Naive thymus-derived CD4-positive, alpha-beta T cell (primary cell): ENCODE measurements at regions of chr1 and their contacts with region 1.

Region 1: DNA sequence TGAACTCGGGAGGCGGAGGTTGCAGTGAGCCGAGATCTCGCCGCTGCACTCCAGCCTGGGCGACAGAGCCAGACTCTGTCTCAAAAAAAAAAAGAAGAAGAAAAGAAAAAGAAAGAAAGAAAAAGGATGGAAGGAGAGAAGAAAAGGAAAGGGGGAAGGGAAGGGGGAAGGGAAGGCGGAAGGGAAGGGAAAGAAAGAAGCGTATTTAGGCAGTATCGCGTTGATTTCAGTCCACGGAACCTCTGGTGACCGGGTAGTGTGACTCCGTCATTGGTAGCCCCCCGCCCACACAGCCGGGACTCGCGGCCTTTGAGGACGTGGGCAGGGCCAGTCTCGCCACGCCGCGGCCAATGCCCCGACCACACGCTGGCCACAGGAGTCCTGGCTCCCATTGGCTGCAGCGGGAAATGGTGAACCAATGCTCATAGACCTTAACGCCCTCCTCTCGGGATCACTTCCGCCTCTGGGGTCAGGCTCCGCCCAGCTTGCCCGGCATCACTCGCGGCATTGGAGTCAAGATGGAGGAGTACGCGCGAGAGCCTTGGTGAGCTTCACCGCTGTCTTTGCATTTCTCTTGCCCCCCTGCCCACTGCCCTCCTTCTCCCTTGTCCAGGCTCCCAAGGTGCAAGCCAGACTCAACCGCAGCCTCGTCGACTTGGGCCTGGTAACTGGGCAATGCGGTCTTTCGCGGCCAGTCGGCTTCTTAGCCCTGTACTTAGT is at the start of gene TIMM17A:
- DNase-seq: peak; percentile 84 to 94 (median 90)
- ATAC-seq: peak; percentile 99
- H3K4me3 ChIP-seq: peak within 1 kb of the TSS; percentile 97
- H3K4me3 Mint-ChIP-seq: peak within 1 kb of the TSS; percentile 90 to 100 (median 98)
- H3K27ac ChIP-seq: peak within 1 kb of the TSS; percentile 83
- H3K27ac Mint-ChIP-seq: peak within 1 kb of the TSS; percentile 89 to 99 (median 97)
- H3K4me1 ChIP-seq: peaks cover 11 to 14% of the 10 kb centered on the region in 2 donors
- H3K4me1 Mint-ChIP-seq: peaks cover 15 to 32% (median 25%) of the 10 kb centered on the region in 7 donors
- H3K27me3 ChIP-seq: no peaks in the 10 kb centered on the region
- H3K27me3 Mint-ChIP-seq: peaks cover 0 to 2% (median 0%) of the 10 kb centered on the region in 5 donors
- total RNA-seq, gene TIMM17A: 27.1 to 58.4 (median 43.1) TPM

Region 2: GRCh38 chr1:201154389-201155165 is 800.6 kb before region 1 on chr1 and contains the start of gene TMEM9:
- CTCF ChIA-PET with region 1: no interaction called
- POLR2A ChIA-PET with region 1: no interaction called
- intact Hi-C with region 1: loop called in 1 of 2 experiments (anchors 10 kb)
- DNase-seq: peak; percentile 94 to 99 (median 97)
- ATAC-seq: peak; percentile 97
- H3K4me3 ChIP-seq: peak within 1 kb of the TSS; percentile 48
- H3K4me3 Mint-ChIP-seq: peak within 1 kb of the TSS; percentile 86 to 94 (median 93)
- H3K27ac ChIP-seq: peak within 1 kb of the TSS; percentile 65
- H3K27ac Mint-ChIP-seq: peak within 1 kb of the TSS; percentile 83 to 96 (median 91)
- H3K4me1 ChIP-seq: peaks cover 7 to 14% of the 10 kb centered on the region in 2 donors
- H3K4me1 Mint-ChIP-seq: peaks cover 12 to 36% (median 20%) of the 10 kb centered on the region in 7 donors
- H3K27me3 ChIP-seq: no peaks in the 10 kb centered on the region
- H3K27me3 Mint-ChIP-seq: peaks cover 6 to 25% (median 9%) of the 10 kb centered on the region in 5 donors
- total RNA-seq, gene TMEM9: 15.3 to 24.5 (median 16.7) TPM

Region 3: DNA sequence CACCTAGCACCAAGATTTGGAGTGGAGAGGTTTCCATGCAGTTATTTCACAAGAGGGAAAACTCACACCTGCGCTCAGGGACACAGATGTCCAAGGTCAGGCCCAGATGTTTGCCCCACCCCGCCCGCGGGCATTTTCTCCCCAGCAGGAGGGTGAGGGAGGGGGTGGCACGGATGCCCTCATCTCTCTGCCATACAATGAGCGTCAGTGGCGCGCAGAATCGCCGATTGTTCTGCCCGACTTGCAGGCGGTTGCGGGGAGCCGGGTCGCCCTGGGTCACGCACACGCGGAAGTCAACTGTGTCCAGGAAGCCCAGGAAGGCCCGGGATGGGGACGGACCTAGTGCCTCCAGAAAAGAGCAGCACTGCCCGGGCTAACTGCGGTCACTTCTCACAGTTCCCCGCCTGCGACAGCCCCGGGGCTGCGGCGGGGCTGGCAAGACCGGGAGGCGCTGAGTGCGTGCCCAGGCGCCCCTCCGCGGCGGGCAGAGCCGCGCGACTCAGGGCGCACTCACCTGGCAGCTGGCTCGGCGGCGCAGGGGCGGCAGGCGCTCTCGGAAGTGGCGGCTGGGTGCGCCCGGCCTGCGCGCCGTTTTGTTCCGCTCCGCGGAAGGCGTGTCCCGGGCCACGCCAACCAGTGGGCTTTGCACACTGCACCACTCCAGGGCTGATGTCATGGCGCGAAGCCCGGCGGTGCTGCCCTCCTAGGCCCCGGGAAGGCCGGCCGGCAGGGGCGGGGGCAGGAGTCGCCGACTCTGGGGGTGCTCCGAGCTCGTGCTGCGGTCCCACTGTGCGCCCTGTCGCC is 448.4 kb before region 1 on chr1 and contains the start of gene CSRP1:
- CTCF ChIA-PET with region 1: no interaction called
- POLR2A ChIA-PET with region 1: no interaction called
- intact Hi-C with region 1: loop called in 1 of 2 experiments (anchors 5 kb)
- DNase-seq: peak; percentile 64 to 84 (median 80)
- ATAC-seq: peak; percentile 97
- H3K4me3 ChIP-seq: peak within 1 kb of the TSS; percentile 87
- H3K4me3 Mint-ChIP-seq: peak within 1 kb of the TSS; percentile 88 to 94 (median 91)
- H3K27ac ChIP-seq: peak within 1 kb of the TSS; percentile 74
- H3K27ac Mint-ChIP-seq: peak within 1 kb of the TSS; percentile 83 to 97 (median 91)
- H3K4me1 ChIP-seq: peaks cover 20 to 28% of the 10 kb centered on the region in 2 donors
- H3K4me1 Mint-ChIP-seq: peaks cover 30 to 61% (median 57%) of the 10 kb centered on the region in 7 donors
- H3K27me3 ChIP-seq: no peaks in the 10 kb centered on the region
- H3K27me3 Mint-ChIP-seq: no peaks in the 10 kb centered on the region
- total RNA-seq, gene CSRP1: 24.2 to 83.1 (median 37.7) TPM

Region 4: DNA sequence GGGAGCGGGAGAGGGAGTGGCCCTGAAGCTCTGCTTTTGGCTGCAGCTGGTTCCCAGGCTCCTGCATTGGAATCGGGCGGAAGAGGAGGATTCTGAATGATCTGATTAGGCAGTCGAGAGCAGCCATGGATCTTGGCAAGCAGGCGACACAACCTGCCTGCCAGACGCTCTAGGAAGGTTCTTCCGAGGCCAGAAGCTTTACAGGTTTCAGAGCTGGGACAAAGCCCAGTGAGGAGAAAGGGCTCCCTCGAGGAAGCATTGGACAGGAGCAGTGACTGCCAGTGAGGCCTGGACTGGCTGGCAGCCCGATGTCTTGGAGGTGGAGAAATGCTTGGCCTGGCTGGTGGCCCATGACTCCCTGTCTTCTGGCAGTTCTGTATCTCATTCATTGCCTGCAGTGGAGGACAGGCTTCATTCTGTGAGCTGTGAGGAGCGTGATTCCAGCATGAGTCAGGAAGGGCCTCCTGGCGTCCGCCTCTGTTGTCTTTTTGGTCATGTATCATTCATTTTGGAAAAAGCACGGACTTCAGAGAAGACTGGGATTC is 258.9 kb before region 1 on chr1:
- CTCF ChIA-PET with region 1: no interaction called
- POLR2A ChIA-PET with region 1: no interaction called
- intact Hi-C with region 1: no loop called
- DNase-seq: no peak
- ATAC-seq: no peak
- H3K4me3 ChIP-seq: no peak overlapping the region
- H3K4me3 Mint-ChIP-seq: no peak overlapping the region
- H3K27ac ChIP-seq: no peak overlapping the region
- H3K27ac Mint-ChIP-seq: no peak overlapping the region
- H3K4me1 ChIP-seq: no peaks in the 10 kb centered on the region
- H3K4me1 Mint-ChIP-seq: no peaks in the 10 kb centered on the region
- H3K27me3 ChIP-seq: no peaks in the 10 kb centered on the region
- H3K27me3 Mint-ChIP-seq: peaks cover 0 to 6% (median 0%) of the 10 kb centered on the region in 5 donors

Region 5: GRCh38 chr1:201895913-201896807 is 59.0 kb before region 1 on chr1:
- CTCF ChIA-PET with region 1: interaction called, 5 read pairs
- POLR2A ChIA-PET with region 1: interaction called, 3 read pairs
- intact Hi-C with region 1: loop called in 1 of 2 experiments (anchors 1 kb)
- DNase-seq: peak; percentile 54 to 86 (median 73)
- ATAC-seq: peak; percentile 93
- H3K4me3 ChIP-seq: no peak overlapping the region
- H3K4me3 Mint-ChIP-seq: peak overlapping the region in 9 of 10 donors; percentile 5 to 73 (median 60)
- H3K27ac ChIP-seq: no peak overlapping the region
- H3K27ac Mint-ChIP-seq: peak overlapping the region in 7 of 9 donors; percentile 10 to 86 (median 59)
- H3K4me1 ChIP-seq: peaks cover 0 to 8% of the 10 kb centered on the region in 2 donors
- H3K4me1 Mint-ChIP-seq: peaks cover 0 to 16% (median 6%) of the 10 kb centered on the region in 7 donors
- H3K27me3 ChIP-seq: no peaks in the 10 kb centered on the region
- H3K27me3 Mint-ChIP-seq: peaks cover 12 to 34% (median 25%) of the 10 kb centered on the region in 5 donors

Region 6: GRCh38 chr1:202018468-202019255 is 63.5 kb after region 1 on chr1:
- CTCF ChIA-PET with region 1: no interaction called
- POLR2A ChIA-PET with region 1: no interaction called
- intact Hi-C with region 1: no loop called
- DNase-seq: no peak
- ATAC-seq: peak; percentile 68
- H3K4me3 ChIP-seq: no peak overlapping the region
- H3K4me3 Mint-ChIP-seq: no peak overlapping the region
- H3K27ac ChIP-seq: no peak overlapping the region
- H3K27ac Mint-ChIP-seq: peak overlapping the region in 1 of 9 donors; percentile 36
- H3K4me1 ChIP-seq: no peaks in the 10 kb centered on the region
- H3K4me1 Mint-ChIP-seq: no peaks in the 10 kb centered on the region
- H3K27me3 ChIP-seq: no peaks in the 10 kb centered on the region
- H3K27me3 Mint-ChIP-seq: peaks cover 6 to 13% (median 11%) of the 10 kb centered on the region in 5 donors

Region 7: DNA sequence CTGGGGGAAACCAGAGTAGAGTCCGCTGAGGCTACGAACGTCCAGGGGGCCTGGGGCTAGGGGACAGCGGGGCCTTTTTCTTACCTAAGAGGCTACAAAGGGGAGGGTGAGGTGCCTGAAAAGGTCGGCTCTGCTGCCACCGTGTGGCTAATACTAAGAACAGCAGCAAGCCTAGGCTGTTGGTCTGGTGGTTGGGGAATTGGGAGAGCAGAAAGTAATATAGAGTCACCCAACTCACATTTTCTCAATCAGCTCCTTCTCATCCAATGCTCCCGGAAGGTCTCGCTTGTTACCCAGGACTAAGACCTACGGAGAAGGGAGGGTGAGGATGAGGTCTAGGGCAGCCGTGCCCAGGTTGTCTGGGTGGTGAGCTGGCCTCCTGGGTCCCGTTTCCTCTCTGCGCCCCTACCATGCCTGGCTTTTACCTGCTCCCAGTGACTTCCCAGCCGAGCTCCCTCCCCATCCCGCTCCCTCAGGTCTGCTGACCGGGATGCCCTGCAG is 180.1 kb after region 1 on chr1:
- CTCF ChIA-PET with region 1: no interaction called
- POLR2A ChIA-PET with region 1: no interaction called
- intact Hi-C with region 1: loop called in 1 of 2 experiments (anchors 5 kb)
- DNase-seq: peak in 7 of 9 donors; percentile 27 to 63 (median 53)
- ATAC-seq: peak; percentile 92
- H3K4me3 ChIP-seq: no peak overlapping the region
- H3K4me3 Mint-ChIP-seq: no peak overlapping the region
- H3K27ac ChIP-seq: no peak overlapping the region
- H3K27ac Mint-ChIP-seq: peak overlapping the region in 2 of 9 donors; percentile 24 to 43
- H3K4me1 ChIP-seq: no peaks in the 10 kb centered on the region
- H3K4me1 Mint-ChIP-seq: peaks cover 4 to 15% (median 8%) of the 10 kb centered on the region in 7 donors
- H3K27me3 ChIP-seq: no peaks in the 10 kb centered on the region
- H3K27me3 Mint-ChIP-seq: no peaks in the 10 kb centered on the region

Region 8: DNA sequence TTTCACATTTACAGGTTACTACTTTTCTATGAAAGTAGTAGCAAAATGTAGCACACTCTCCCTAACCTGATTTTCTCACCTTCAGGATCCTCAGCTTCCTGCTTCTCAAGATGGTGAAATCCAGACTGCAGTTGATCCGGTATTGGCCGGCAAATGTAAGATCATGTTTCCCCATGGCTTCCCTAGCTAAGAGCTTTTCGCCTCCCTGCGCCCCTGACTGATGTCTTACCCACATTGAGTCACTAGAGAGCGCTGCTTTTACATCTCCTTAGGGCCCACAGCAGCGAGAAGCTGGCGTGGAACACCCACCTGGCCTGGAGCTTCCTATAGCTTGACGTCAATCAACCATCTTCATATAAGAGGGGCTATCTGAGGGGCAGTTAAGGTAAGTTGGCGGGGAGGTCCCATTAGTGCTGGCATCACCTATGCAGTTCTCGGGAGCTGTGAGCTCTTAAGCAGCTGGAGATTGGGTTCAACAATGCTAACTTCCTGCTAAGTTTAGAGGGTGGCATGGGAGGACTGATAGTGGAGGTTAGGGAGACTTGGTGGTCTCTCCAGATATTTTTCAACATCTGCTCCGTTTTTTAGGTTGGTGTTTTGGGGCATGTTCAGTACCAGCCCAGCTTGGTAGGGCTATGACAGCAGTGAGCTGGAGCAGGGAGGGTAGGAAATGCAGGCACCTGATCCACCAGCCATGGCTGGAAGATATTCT is 199.8 kb after region 1 on chr1:
- CTCF ChIA-PET with region 1: no interaction called
- POLR2A ChIA-PET with region 1: no interaction called
- intact Hi-C with region 1: no loop called
- DNase-seq: peak in 5 of 9 donors; percentile 45 to 52 (median 48)
- ATAC-seq: peak; percentile 85
- H3K4me3 ChIP-seq: no peak overlapping the region
- H3K4me3 Mint-ChIP-seq: peak overlapping the region in 2 of 10 donors; percentile 1 to 46
- H3K27ac ChIP-seq: peak overlapping the region; percentile 47
- H3K27ac Mint-ChIP-seq: peak overlapping the region; percentile 17 to 87 (median 67)
- H3K4me1 ChIP-seq: peaks cover 29 to 35% of the 10 kb centered on the region in 2 donors
- H3K4me1 Mint-ChIP-seq: peaks cover 28 to 58% (median 51%) of the 10 kb centered on the region in 7 donors
- H3K27me3 ChIP-seq: no peaks in the 10 kb centered on the region
- H3K27me3 Mint-ChIP-seq: no peaks in the 10 kb centered on the region

Region 9: DNA sequence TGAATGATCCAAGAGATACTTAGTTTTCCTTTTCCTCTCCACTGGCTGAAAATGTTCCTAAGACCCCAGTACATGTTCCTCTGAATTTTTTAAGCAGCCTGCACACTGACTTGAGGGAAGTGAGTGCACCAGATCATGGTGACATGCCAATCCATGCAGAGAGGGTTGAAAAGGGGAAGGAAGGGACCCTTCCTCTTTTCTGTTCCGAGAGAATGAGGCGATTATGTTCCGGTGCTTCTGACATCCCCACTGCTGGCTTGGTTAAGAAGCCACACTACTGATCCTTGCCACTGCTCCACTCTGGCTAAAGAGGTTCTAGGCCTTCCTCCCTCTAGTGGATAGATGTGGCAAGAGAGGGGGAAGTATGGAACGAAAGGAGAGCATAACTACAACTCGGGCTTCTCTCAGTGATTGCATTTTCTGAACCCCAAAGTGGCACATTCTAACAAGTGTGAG is 1013.7 kb after region 1 on chr1:
- CTCF ChIA-PET with region 1: no interaction called
- POLR2A ChIA-PET with region 1: no interaction called
- intact Hi-C with region 1: loop called in 1 of 2 experiments (anchors 2 kb)
- DNase-seq: peak in 7 of 9 donors; percentile 24 to 64 (median 47)
- ATAC-seq: peak; percentile 73
- H3K4me3 ChIP-seq: no peak overlapping the region
- H3K4me3 Mint-ChIP-seq: peak overlapping the region in 9 of 10 donors; percentile 40 to 98 (median 94)
- H3K27ac ChIP-seq: peak overlapping the region; percentile 83
- H3K27ac Mint-ChIP-seq: peak overlapping the region in 8 of 9 donors; percentile 80 to 96 (median 94)
- H3K4me1 ChIP-seq: peaks cover 14 to 20% of the 10 kb centered on the region in 2 donors
- H3K4me1 Mint-ChIP-seq: peaks cover 15 to 34% (median 27%) of the 10 kb centered on the region in 7 donors
- H3K27me3 ChIP-seq: no peaks in the 10 kb centered on the region
- H3K27me3 Mint-ChIP-seq: peaks cover 0 to 15% (median 0%) of the 10 kb centered on the region in 5 donors